ENCODE measurements at regions of chr17 and their contacts with region 1.

Region 1: DNA sequence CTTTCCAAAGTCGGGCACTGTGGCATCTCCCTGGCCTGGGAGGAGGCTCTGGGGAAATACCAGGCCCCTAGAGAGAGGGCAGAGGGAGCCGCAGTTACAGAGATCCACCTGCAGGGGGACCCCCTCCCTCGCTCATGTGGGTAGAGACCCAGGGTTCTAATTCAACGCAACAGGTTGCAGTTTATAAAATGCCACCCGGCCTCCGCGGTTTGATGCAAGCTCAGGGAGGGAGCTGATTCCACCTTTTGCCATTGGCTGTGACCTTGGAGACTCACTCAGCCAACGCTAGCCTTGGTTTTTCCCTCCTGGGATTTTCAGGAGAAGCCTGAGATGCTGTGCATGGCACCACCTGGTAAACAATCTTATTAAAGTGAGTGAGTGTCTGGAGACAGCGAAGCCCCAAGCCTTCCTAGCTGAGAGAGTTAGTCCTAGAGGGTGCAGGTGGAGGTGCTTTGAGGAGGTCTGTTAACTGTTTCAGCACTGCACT is 12.1 kb downstream of the TTLL6 start:
- DNase-seq: peak; percentile 67
- H3K4me3 Mint-ChIP-seq: no peak overlapping the region
- H3K27ac Mint-ChIP-seq: no peak overlapping the region
- H3K4me1 Mint-ChIP-seq: peaks cover 4% of the 10 kb centered on the region
- H3K27me3 Mint-ChIP-seq: peaks cover 11% of the 10 kb centered on the region
- CTCF ChIP-seq: peak; percentile 89

Region 2: GRCh38 chr17:48745381-48746275 is 59.3 kb before region 1 on chr17:
- CTCF ChIA-PET with region 1: no interaction called
- POLR2A ChIA-PET with region 1: no interaction called
- intact Hi-C with region 1: no loop called
- DNase-seq: no peak
- H3K4me3 Mint-ChIP-seq: no peak overlapping the region
- H3K27ac Mint-ChIP-seq: no peak overlapping the region
- H3K4me1 Mint-ChIP-seq: no peaks in the 10 kb centered on the region
- H3K27me3 Mint-ChIP-seq: peaks cover 100% of the 10 kb centered on the region
- CTCF ChIP-seq: no peak

Region 3: GRCh38 chr17:48767263-48767774 is 37.6 kb before region 1 on chr17:
- CTCF ChIA-PET with region 1: no interaction called
- POLR2A ChIA-PET with region 1: no interaction called
- intact Hi-C with region 1: no loop called
- DNase-seq: no peak
- H3K4me3 Mint-ChIP-seq: no peak overlapping the region
- H3K27ac Mint-ChIP-seq: no peak overlapping the region
- H3K4me1 Mint-ChIP-seq: no peaks in the 10 kb centered on the region
- H3K27me3 Mint-ChIP-seq: peaks cover 71% of the 10 kb centered on the region
- CTCF ChIP-seq: no peak

Region 4: DNA sequence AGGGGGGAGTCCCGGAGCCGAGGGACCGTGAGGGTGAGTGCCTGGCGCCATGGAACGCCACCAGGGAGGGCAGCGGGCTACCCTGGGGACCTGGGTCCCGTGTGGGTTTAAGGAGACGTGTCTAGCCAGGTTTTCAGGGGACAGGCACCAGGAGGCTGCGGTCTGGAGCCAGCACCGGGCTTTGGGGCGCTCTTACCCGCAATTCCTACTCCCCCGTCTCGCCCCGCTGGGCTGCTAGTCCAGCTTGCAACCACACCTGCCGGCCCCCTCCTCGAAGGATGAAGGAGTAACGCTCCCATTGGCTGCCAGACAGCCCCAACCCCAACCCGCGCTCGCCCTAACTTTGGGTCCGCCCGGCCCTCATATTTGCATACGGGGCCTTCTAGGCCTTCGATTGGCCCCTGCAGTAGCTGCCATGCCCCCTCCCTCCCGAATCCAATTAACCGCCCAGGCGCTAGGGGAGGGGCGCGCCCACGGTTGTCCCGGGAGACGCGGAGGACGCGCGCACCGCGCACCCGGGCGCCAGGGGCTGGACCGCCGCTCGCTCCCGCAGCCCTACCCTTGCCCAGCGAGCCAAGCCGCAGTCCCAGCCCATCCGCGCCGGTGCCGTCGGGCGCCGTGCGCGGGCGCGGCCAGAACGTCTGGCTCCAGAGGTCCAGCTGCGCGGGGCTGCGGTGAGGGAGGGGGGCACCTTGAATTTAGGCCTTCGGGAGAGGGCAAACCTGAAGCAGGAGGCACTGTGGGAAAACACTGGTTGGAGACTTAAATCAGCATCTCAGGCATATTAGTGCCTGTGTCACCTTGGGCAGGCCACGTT is 12.0 kb after region 1 on chr17 and contains the start of gene TTLL6:
- CTCF ChIA-PET with region 1: interaction called, 19 read pairs
- POLR2A ChIA-PET with region 1: interaction called, 6 read pairs
- intact Hi-C with region 1: no loop called
- DNase-seq: peak; percentile 92
- H3K4me3 Mint-ChIP-seq: peak within 1 kb of the TSS; percentile 39
- H3K27ac Mint-ChIP-seq: no peak within 1 kb of the TSS
- H3K4me1 Mint-ChIP-seq: peaks cover 10% of the 10 kb centered on the region
- H3K27me3 Mint-ChIP-seq: peaks cover 11% of the 10 kb centered on the region
- CTCF ChIP-seq: no peak
- total RNA-seq, gene TTLL6: not detected in 2 replicates

Region 5: DNA sequence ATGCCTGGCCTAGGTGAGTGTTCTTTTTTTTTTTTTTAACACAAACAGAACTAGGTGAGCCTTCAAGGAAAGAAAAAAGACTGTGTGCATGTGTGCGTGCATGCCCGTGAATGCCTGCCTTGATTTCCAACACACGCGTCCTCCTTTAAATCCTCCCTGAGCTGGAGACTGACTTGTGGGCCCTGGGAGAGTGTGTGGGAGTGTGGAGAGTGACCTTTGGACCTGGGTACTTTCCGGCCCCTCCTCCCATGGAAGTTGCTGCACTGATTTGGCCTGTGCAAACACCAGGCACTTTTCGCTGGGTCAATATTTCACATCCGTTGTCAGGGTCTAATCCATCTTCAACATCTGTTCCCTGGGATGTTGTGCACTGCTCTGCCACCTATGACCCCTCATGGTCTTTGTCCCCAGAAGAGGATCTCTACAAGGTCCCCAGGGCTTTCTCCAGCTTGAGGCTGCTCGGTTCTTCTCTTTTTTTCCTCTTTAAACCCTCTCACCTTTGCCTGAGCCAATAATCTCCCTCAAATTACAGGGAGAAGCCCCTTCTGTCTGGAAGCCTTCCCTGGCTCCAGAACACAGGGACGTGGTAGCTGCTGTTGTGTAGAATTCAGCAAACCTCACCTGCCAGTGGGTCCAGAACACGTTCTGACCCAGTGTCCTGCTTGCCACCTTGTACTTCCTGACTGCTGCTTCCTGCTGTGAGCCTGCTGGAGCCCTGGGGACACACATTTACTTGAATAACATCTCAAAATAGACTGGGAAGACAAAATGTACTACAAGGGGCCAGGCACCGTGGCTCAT is 66.8 kb after region 1 on chr17:
- CTCF ChIA-PET with region 1: interaction called, 23 read pairs
- POLR2A ChIA-PET with region 1: interaction called, 4 read pairs
- intact Hi-C with region 1: no loop called
- DNase-seq: no peak
- H3K4me3 Mint-ChIP-seq: no peak overlapping the region
- H3K27ac Mint-ChIP-seq: no peak overlapping the region
- H3K4me1 Mint-ChIP-seq: no peaks in the 10 kb centered on the region
- H3K27me3 Mint-ChIP-seq: no peaks in the 10 kb centered on the region
- CTCF ChIP-seq: no peak

Region 6: GRCh38 chr17:49130891-49131290 is 325.9 kb after region 1 on chr17:
- CTCF ChIA-PET with region 1: no interaction called
- POLR2A ChIA-PET with region 1: no interaction called
- intact Hi-C with region 1: no loop called
- DNase-seq: no peak
- H3K4me3 Mint-ChIP-seq: no peak overlapping the region
- H3K27ac Mint-ChIP-seq: no peak overlapping the region
- H3K4me1 Mint-ChIP-seq: peaks cover 20% of the 10 kb centered on the region
- H3K27me3 Mint-ChIP-seq: no peaks in the 10 kb centered on the region
- CTCF ChIP-seq: no peak

Region 7: DNA sequence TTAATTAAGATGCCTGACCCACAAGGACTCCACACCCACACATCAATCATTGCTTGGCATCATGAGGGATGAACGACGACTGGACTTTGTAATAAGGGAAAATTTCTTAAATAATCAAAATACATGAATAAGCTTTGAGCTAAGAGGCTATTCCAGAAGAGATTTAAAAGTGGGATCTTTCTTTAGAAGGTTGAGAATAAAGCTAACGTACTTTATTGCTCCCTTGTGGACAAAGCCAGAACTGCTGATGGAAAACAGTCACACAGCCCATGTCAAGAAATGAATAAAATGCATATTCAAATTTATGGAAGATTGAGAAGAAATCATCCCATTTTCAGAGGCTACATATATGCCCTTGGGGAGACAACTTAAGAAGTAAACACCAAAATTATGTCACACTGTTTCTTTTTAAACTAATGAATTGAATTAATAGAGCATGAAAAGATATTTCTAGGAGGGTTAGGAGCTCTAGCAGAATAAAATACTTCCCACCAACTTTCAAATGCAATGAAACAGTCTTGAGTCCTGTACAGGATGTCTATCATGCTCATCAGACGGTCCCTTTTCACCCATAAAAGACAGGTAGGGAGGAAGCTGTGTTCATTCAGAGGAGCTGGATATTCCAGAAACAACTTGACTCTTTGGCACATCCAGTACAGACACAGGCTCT is 485.9 kb after region 1 on chr17:
- CTCF ChIA-PET with region 1: no interaction called
- POLR2A ChIA-PET with region 1: no interaction called
- intact Hi-C with region 1: loop called (anchors 10 kb)
- DNase-seq: peak; percentile 47
- H3K4me3 Mint-ChIP-seq: no peak overlapping the region
- H3K27ac Mint-ChIP-seq: no peak overlapping the region
- H3K4me1 Mint-ChIP-seq: no peaks in the 10 kb centered on the region
- H3K27me3 Mint-ChIP-seq: no peaks in the 10 kb centered on the region
- CTCF ChIP-seq: peak; percentile 49